A673 (cell line): ENCODE measurements at regions of chr12 and their contacts with region 1.

Region 1: DNA sequence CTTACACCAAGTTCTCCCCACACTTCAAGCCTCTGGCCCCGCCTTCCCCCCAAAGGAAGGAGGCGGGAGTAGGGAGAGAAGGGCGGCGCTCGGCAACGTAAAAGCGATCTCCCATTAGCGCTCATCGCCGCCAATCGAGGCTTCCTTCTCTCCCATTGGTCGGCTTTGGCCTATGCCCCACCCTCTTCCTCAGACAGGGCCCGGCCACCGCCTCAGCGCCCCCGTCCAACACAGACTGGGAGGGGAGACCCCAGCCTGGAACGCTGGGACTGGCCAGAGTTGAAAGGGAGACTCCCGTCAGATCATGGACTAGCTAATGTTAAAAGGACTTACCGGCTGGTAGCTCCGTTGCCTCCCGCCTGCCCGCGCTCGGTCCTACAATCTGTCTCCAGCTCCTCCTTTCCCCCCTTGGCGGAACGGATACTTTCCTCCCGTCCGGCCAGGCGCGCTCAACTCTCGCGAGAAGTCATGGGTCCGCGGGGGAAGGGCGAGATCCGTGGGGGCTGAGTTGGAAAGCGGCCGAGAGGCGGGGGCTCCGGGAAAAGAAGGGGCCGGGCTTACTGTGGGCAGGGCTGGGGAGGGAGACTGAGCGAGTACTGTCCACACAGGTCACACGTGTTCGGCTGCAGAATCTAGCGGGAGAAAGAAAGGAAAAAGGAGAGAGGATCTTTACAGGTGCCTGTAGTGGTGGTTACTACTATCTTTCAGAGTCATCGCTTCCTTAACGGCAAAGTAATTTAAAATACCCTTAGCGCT is at the start of gene ATF7:
- DNase-seq: peak; percentile 99
- H3K4me3 ChIP-seq: peak within 1 kb of the TSS; percentile 55
- H3K27ac ChIP-seq: peak within 1 kb of the TSS; percentile 98
- H3K4me1 ChIP-seq: peaks cover 20% of the 10 kb centered on the region
- H3K27me3 ChIP-seq: no peaks in the 10 kb centered on the region
- CTCF ChIP-seq: no peak
- total RNA-seq, gene ATF7: 38.8 and 44.3 TPM in 2 replicates

Region 2: DNA sequence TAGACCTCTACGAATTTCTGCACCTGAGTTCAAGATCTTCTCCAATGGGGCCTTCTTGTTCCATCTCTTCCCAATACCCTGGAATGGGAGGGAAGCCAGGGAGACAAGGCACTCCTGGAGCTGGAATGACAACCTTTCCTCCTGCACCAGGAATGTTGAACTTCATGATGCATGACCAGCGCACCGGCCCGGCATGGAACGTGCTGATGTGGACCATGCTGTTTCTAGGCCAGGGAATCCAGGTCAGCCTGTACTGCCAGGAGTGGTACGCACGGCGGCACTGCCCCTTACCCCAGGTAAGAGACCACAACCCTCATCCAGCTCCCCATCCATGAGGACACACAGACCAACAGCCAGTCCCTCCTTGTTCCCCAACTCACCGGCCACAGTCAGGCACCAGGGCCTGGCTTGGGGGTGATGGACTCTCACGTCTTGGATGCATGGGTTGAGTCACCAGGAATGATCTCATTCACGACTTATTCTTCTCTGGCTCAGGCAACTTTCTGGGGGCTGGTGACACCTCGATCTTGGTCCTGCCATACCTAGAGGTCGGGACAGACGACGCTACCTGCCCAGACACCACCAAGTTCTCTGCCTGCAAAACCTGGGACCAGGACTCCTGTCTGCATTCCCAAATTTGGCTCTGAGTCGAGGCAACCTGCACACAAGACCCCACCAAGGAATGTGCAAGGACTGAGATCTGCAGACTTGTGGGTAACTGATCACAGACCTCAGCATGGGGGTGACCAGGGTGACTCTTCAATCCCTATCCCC is 502.4 kb before region 1 on chr12:
- CTCF ChIA-PET with region 1: no interaction called
- POLR2A ChIA-PET with region 1: no interaction called
- intact Hi-C with region 1: no loop called
- DNase-seq: no peak
- H3K4me3 ChIP-seq: no peak overlapping the region
- H3K27ac ChIP-seq: no peak overlapping the region
- H3K4me1 ChIP-seq: no peaks in the 10 kb centered on the region
- H3K27me3 ChIP-seq: no peaks in the 10 kb centered on the region
- CTCF ChIP-seq: no peak

Region 3: GRCh38 chr12:53675651-53676453 is 49.7 kb after region 1 on chr12 and contains the start of gene ATP5MC2:
- CTCF ChIA-PET with region 1: interaction called, 5 read pairs
- POLR2A ChIA-PET with region 1: no interaction called
- intact Hi-C with region 1: loop called (anchors 2 kb)
- DNase-seq: peak; percentile 99
- H3K4me3 ChIP-seq: peak within 1 kb of the TSS; percentile 73
- H3K27ac ChIP-seq: peak within 1 kb of the TSS; percentile 97
- H3K4me1 ChIP-seq: peaks cover 55% of the 10 kb centered on the region
- H3K27me3 ChIP-seq: no peaks in the 10 kb centered on the region
- CTCF ChIP-seq: peak; percentile 100
- total RNA-seq, gene ATP5MC2: 447 and 450 TPM in 2 replicates